Right lobe of liver (tissue), 6 donors: ENCODE measurements at regions of chr6 and their contacts with region 1.

Region 1: DNA sequence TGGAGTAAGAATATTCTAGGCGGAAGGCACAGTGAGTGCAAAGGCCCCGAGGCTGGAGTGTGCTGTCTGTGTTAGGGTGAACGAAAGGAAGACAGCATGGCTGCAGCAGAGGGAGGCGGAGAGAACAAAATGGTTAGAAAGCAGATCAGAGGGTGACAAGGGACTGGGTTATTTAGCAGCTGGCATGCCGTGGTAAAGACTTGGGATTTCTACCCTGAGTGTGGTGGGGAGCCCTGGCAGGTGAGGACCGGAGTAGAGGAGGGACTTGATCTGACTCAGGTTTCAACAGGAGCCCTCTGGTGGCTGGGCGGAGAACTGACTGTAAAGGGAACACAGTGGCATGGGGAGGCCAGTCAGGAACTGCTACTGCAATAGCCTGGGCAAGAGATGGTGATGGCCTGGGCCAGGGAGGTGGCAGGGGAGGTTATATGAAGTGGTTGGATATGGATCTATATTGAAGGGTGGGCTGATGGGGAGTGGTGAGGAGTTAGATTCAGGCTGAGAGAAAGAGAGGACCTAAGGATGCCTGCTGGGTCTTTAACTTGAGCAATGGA is 38.0 kb downstream of the PIM1 start:
- DNase-seq: peak; percentile 87 to 89 (median 88)
- ATAC-seq: peak; percentile 83 to 92 (median 90)
- H3K4me3 ChIP-seq: no peak overlapping the region
- H3K27ac ChIP-seq: no peak overlapping the region
- H3K4me1 ChIP-seq: peaks cover 0 to 14% (median 6%) of the 10 kb centered on the region in 4 donors
- H3K27me3 ChIP-seq: no peaks in the 10 kb centered on the region
- CTCF ChIP-seq: peak; percentile 77 to 90 (median 81)
- POLR2A ChIP-seq: no peak

Region 2: GRCh38 chr6:37029249-37029971 is 178.6 kb before region 1 on chr6:
- intact Hi-C with region 1: loop called in 1 of 2 experiments (anchors 10 kb)
- DNase-seq: peak in 2 of 3 donors; percentile 79 to 82
- ATAC-seq: peak; percentile 88 to 95 (median 89)
- H3K4me3 ChIP-seq: no peak overlapping the region
- H3K27ac ChIP-seq: no peak overlapping the region
- H3K4me1 ChIP-seq: peaks cover 0 to 3% (median under 1%) of the 10 kb centered on the region in 4 donors
- H3K27me3 ChIP-seq: no peaks in the 10 kb centered on the region
- CTCF ChIP-seq: peak; percentile 63 to 82 (median 74)
- POLR2A ChIP-seq: no peak

Region 3: DNA sequence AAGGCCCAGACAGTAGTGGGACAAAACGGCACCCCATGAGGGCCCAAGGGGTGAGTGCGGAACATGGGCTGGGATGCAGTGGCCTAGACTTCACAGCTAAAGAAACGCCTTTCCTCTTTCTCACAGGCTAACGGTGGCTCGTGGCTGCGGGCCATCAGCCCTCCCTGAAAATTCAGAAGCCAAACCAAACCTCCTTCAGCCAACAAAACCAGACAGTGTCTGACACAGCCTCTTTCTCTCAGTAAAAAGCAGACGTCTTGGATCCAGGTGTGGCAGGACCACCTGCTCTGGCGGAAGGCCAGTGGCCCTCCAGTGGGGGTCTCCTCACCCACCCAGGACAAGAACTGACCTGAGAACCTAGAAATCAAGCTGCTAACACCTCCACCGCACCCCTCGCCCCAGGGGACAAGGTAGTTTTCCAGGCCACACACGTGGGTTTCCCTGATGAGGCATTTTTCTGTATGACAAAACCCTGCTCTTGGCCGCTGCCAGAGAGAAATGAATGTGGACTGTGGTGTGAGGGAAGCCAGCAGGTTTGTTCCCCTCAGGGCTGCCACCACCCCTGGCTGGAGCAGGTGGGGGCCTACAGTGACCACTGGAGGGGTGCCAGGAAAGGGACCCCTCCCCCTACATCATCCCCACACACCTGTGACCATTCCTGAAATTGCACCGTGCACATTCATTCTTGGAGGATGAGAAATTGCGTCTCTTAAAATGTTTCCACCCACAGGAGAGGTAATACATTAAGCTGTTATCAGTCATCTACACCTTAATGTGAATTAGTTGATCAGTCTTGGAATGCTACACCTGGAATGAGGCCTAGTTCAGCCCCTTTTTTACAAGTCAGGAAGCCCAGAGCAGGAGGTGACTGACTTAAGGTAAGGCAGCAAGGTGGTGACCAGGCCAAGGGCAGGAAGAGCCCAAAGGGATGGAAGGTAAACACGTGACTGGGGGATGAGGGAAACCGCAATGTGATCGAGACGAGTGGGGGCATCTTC is 114.8 kb before region 1 on chr6:
- intact Hi-C with region 1: no loop called
- DNase-seq: no peak
- ATAC-seq: peak in 1 of 4 donors; percentile 29
- H3K4me3 ChIP-seq: no peak overlapping the region
- H3K27ac ChIP-seq: no peak overlapping the region
- H3K4me1 ChIP-seq: peaks cover 0 to 7% (median 0%) of the 10 kb centered on the region in 4 donors
- H3K27me3 ChIP-seq: no peaks in the 10 kb centered on the region
- CTCF ChIP-seq: no peak
- POLR2A ChIP-seq: no peak

Region 4: GRCh38 chr6:37418722-37419121 is 210.7 kb after region 1 on chr6:
- intact Hi-C with region 1: no loop called
- DNase-seq: no peak
- ATAC-seq: no peak
- H3K4me3 ChIP-seq: no peak overlapping the region
- H3K27ac ChIP-seq: no peak overlapping the region
- H3K4me1 ChIP-seq: no peaks in the 10 kb centered on the region
- H3K27me3 ChIP-seq: no peaks in the 10 kb centered on the region
- CTCF ChIP-seq: no peak
- POLR2A ChIP-seq: no peak